Activated naive CD4-positive, alpha-beta T cell treated with anti-CD3 and anti-CD28 coated beads for 36 hours (primary cell): ENCODE measurements at regions of chr5 and their contacts with region 1.

Region 1: DNA sequence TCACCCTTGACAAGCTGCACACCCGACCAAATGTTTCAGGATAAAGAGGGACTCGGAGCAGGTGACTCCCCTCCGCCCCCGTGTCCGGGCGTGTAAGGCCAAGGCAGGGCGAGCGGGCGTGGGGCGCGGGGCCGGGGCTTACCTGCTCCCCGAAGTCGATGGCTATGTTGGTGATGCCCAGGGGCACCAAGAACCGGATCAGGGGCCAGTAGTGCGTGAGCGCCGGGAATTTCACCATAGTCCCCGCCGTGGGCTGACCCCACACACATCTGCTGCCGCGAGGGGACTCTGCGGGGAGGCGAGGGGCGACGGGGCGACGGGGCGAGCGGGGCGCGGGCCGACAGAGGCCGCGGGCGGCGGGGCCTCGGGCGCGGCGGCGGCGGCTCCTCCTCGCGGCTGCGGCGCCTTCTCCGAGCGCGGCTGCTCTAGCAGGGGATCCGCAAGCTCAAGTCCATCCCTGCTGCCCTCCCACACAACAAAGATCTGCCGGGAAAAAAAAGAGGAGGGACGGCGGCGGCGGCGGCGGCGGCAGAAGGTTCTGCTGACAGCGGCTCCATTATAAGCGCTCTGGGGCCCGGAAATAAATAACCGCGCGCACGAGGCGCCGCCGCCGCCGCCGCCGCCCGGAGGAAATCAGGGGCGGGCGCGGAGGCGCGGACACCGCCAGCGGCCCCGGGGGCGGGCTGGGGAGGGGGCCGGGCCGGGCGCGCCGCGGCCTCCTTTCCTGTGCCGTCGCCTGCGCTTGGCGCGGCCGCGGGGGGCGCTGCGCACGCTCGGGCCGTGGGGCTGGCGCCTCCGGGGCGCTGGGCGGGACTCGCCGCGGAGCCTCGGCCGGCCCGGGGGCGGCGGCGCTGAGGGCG is at the start of gene ANKH:
- DNase-seq: peak; percentile 79
- H3K4me3 Mint-ChIP-seq: peak within 1 kb of the TSS; percentile 96
- H3K27ac Mint-ChIP-seq: peak within 1 kb of the TSS; percentile 95
- H3K4me1 Mint-ChIP-seq: peaks cover 33% of the 10 kb centered on the region
- H3K27me3 Mint-ChIP-seq: no peaks in the 10 kb centered on the region
- total RNA-seq, gene ANKH: 92.0 to 93.5 TPM

Region 2: GRCh38 chr5:14415024-14415697 is 456.3 kb before region 1 on chr5:
- CTCF ChIA-PET with region 1: no interaction called
- intact Hi-C with region 1: loop called (anchors 2 kb)
- DNase-seq: peak; percentile 43
- H3K4me3 Mint-ChIP-seq: peak overlapping the region; percentile 51
- H3K27ac Mint-ChIP-seq: peak overlapping the region; percentile 84
- H3K4me1 Mint-ChIP-seq: peaks cover 50% of the 10 kb centered on the region
- H3K27me3 Mint-ChIP-seq: peaks cover 2% of the 10 kb centered on the region

Region 3: DNA sequence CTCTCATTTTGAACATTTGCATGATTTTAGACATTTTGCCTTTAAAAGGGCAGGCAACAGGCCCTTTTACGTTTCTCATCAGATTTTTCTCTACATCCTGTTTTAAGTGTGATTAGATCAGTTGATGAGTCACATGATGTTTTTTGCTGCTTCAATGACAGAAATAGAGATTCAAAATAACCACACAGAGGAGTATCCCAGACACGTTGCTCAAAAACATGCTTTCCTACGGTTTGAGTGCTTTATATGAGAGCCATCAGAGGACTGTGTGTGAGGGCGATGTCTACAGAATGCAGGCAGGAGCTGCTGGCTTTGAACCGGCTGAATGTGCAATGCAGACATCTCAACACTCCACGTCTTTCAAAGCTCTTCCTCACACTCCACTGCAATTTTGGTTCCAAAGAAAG is 164.8 kb before region 1 on chr5:
- CTCF ChIA-PET with region 1: interaction called, 5 read pairs
- intact Hi-C with region 1: loop called (anchors 1 kb)
- DNase-seq: peak; percentile 46
- H3K4me3 Mint-ChIP-seq: peak overlapping the region; percentile 18
- H3K27ac Mint-ChIP-seq: peak overlapping the region; percentile 94
- H3K4me1 Mint-ChIP-seq: peaks cover 75% of the 10 kb centered on the region
- H3K27me3 Mint-ChIP-seq: no peaks in the 10 kb centered on the region

Region 4: GRCh38 chr5:14809369-14810155 is 61.9 kb before region 1 on chr5:
- CTCF ChIA-PET with region 1: interaction called, 8 read pairs
- intact Hi-C with region 1: loop called (anchors 1 kb)
- DNase-seq: peak; percentile 89
- H3K4me3 Mint-ChIP-seq: peak overlapping the region; percentile 55
- H3K27ac Mint-ChIP-seq: peak overlapping the region; percentile 69
- H3K4me1 Mint-ChIP-seq: peaks cover 53% of the 10 kb centered on the region
- H3K27me3 Mint-ChIP-seq: no peaks in the 10 kb centered on the region

Region 5: DNA sequence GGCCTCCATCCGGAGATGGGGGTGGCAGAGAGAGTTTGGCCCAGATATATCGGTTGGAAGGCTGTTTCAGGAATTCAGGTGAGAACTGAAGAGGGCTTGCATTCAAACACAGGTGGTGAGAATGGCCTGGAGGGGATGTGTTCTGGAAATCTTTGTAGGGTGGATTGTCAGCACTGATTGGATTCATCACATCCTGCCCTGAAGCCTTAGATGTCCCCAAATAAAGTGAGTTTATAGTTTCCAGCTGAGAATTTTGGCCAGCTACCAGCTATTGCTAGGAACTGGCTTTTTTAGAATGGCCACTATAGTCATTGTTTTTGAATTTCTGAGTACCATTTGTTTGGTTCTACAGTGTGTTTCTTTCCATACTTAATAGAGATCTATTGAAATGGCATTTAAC is 46.3 kb after region 1 on chr5:
- CTCF ChIA-PET with region 1: no interaction called
- intact Hi-C with region 1: no loop called
- DNase-seq: no peak
- H3K4me3 Mint-ChIP-seq: no peak overlapping the region
- H3K27ac Mint-ChIP-seq: no peak overlapping the region
- H3K4me1 Mint-ChIP-seq: peaks cover 44% of the 10 kb centered on the region
- H3K27me3 Mint-ChIP-seq: no peaks in the 10 kb centered on the region

Region 6: GRCh38 chr5:14946815-14947640 is 75.6 kb after region 1 on chr5:
- CTCF ChIA-PET with region 1: interaction called, 3 read pairs
- intact Hi-C with region 1: loop called (anchors 1 kb)
- DNase-seq: peak; percentile 59
- H3K4me3 Mint-ChIP-seq: no peak overlapping the region
- H3K27ac Mint-ChIP-seq: peak overlapping the region; percentile 62
- H3K4me1 Mint-ChIP-seq: peaks cover 21% of the 10 kb centered on the region
- H3K27me3 Mint-ChIP-seq: no peaks in the 10 kb centered on the region

Region 7: DNA sequence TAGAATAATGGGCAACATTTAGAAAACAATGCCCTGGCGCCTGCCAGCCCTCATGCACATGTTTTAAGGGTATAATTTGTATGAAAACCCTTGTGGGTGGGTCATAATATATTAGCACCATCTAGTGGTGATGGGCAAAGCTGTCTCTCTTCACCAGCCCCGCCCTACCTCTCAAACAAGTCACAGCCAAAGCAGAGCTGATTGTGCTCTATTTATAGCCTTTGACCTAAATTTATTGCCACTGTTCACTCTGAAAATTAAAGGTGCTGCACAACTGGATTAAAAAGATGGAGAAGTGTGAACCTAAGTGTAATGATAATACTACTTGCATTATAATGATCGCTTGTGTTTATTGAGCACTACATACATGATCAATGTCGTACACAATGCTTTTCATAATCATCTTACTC is 132.1 kb after region 1 on chr5:
- CTCF ChIA-PET with region 1: interaction called, 11 read pairs
- intact Hi-C with region 1: loop called (anchors 1 kb)
- DNase-seq: peak; percentile 70
- H3K4me3 Mint-ChIP-seq: no peak overlapping the region
- H3K27ac Mint-ChIP-seq: no peak overlapping the region
- H3K4me1 Mint-ChIP-seq: no peaks in the 10 kb centered on the region
- H3K27me3 Mint-ChIP-seq: no peaks in the 10 kb centered on the region

Region 8: GRCh38 chr5:15499528-15500324 is 628.3 kb after region 1 on chr5 and contains the start of gene FBXL7:
- CTCF ChIA-PET with region 1: no interaction called
- intact Hi-C with region 1: no loop called
- DNase-seq: no peak
- H3K4me3 Mint-ChIP-seq: no peak within 1 kb of the TSS
- H3K27ac Mint-ChIP-seq: no peak within 1 kb of the TSS
- H3K4me1 Mint-ChIP-seq: no peaks in the 10 kb centered on the region
- H3K27me3 Mint-ChIP-seq: peaks cover 38% of the 10 kb centered on the region
- total RNA-seq, gene FBXL7: not detected

Region 9: DNA sequence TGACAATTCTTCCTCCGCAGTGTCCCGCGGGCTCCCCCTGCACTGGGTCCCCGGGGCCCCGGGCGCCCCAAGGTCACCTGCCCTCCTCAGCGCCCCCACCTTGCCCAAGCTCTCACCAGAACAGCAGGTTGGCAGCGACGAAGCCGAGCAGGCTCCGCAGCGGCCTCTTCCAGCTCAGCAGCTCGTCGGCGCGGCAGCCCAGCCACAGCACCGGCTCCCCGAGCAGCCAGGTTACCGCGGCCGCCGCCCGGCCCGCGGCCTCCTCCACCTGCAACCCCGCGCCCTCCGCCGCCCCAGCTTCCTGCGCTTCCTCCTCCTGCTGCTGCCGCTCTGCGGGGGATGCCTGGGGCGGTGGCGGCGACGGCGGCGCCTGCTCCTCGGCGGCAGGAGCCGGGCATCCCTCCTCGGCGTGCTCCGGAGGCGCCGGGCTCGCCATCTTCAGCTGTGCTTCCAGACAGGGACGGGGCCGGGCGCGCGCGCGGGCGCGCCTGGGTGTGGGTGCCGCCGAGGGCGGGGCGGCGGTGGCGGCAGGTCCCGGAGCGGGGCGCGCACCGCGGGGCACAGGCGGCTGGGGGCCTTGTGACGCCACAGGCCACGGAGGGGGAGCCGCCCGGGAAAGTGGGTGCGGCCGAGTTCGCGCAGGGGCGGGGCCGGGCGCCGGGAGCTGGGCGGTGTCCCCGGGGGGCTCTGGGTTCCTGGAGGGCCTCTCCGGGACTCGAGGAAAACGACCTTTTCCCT is 1745.3 kb after region 1 on chr5 and contains the start of gene RETREG1:
- CTCF ChIA-PET with region 1: no interaction called
- intact Hi-C with region 1: loop called (anchors 2 kb)
- DNase-seq: peak; percentile 78
- H3K4me3 Mint-ChIP-seq: peak within 1 kb of the TSS; percentile 97
- H3K27ac Mint-ChIP-seq: peak within 1 kb of the TSS; percentile 81
- H3K4me1 Mint-ChIP-seq: peaks cover 34% of the 10 kb centered on the region
- H3K27me3 Mint-ChIP-seq: no peaks in the 10 kb centered on the region
- total RNA-seq, gene RETREG1: 19.3 to 20.0 TPM